CD14-positive monocyte (primary cell): ENCODE measurements at regions of chr7 and their contacts with region 1.

Region 1: GRCh38 chr7:6520163-6520981 is 30.9 kb downstream of the GRID2IP start:
- DNase-seq: no peak
- H3K4me3 ChIP-seq: no peak overlapping the region
- H3K4me3 Mint-ChIP-seq: no peak overlapping the region
- H3K27ac ChIP-seq: no peak overlapping the region
- H3K27ac Mint-ChIP-seq: no peak overlapping the region
- H3K4me1 ChIP-seq: peaks cover 5 to 6% of the 10 kb centered on the region in 2 donors
- H3K4me1 Mint-ChIP-seq: peaks cover 6% of the 10 kb centered on the region
- H3K27me3 ChIP-seq: no peaks in the 10 kb centered on the region
- H3K27me3 Mint-ChIP-seq: peaks cover 0 to 8% (median 2%) of the 10 kb centered on the region in 3 donors
- CTCF ChIP-seq: no peak

Region 2: GRCh38 chr7:5854738-5855137 is 665.6 kb before region 1 on chr7:
- intact Hi-C with region 1: loop called in 1 of 2 experiments (anchors 5 kb)
- DNase-seq: no peak
- H3K4me3 ChIP-seq: no peak overlapping the region
- H3K4me3 Mint-ChIP-seq: no peak overlapping the region
- H3K27ac ChIP-seq: no peak overlapping the region
- H3K27ac Mint-ChIP-seq: no peak overlapping the region
- H3K4me1 ChIP-seq: no peaks in the 10 kb centered on the region
- H3K4me1 Mint-ChIP-seq: peaks cover 3% of the 10 kb centered on the region
- H3K27me3 ChIP-seq: no peaks in the 10 kb centered on the region
- H3K27me3 Mint-ChIP-seq: no peaks in the 10 kb centered on the region
- CTCF ChIP-seq: no peak